Mucosa of descending colon (tissue), 3 donors: ENCODE measurements at regions of chr2 and their contacts with region 1.

Region 1: GRCh38 chr2:205358351-205358815 is 323.9 kb upstream of the NRP2 start:
- DNase-seq: no peak
- ATAC-seq: no peak
- H3K4me3 ChIP-seq: no peak overlapping the region
- H3K4me1 ChIP-seq: no peaks in the 10 kb centered on the region
- CTCF ChIP-seq: no peak

Region 2: DNA sequence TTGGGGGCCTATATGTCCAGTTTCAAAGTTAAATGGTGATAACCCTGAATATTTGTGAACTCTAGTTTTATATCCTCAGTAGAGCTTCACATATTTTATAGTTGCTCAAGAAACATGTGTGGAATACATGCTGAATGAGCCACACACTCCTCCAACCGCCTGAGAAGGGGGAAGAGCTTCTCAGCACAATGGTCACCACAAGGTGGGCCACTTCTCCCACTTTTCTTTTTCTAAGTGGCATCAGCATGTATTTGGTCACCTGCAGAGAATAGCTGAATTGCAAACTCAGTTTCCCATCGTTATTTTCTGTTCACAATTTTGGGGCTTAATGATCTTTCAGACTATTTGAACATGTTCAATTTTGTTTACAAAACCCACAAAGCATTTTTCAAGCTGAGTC is 472.6 kb before region 1 on chr2:
- intact Hi-C with region 1: no loop called
- DNase-seq: no peak
- ATAC-seq: no peak
- H3K4me3 ChIP-seq: no peak overlapping the region
- H3K4me1 ChIP-seq: no peaks in the 10 kb centered on the region
- CTCF ChIP-seq: no peak

Region 3: GRCh38 chr2:205017381-205017780 is 341.0 kb before region 1 on chr2:
- intact Hi-C with region 1: loop called in 1 of 2 experiments (anchors 10 kb)
- DNase-seq: no peak
- ATAC-seq: no peak
- H3K4me3 ChIP-seq: no peak overlapping the region
- H3K4me1 ChIP-seq: peaks cover 3% of the 10 kb centered on the region
- CTCF ChIP-seq: no peak

Region 4: DNA sequence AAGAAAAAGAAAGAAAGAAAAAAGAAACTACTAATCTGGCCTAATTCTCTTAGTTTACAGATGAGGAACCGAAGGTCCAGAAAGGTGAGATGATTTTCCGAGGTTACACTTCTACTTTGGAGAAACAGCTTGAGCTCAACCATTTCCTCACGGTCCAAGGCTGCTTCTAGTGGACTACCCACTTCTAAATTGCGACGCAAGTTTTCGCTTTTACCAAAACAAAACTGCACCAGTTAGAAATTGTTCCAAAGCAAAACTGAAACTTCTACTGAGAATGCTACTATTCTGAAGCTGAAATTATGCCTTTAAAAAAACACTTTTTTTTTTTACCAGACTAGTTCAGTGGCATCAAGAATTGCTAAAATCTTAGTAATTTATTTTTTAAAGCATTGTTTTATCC is 626.0 kb after region 1 on chr2:
- intact Hi-C with region 1: no loop called
- DNase-seq: no peak
- ATAC-seq: no peak
- H3K4me3 ChIP-seq: no peak overlapping the region
- H3K4me1 ChIP-seq: no peaks in the 10 kb centered on the region
- CTCF ChIP-seq: no peak